Activated T-helper 1 cell treated with anti-CD3 and anti-CD28 coated beads, Interleukin-12 subunit alpha, Interleukin-12 subunit beta, Interleukin-2, Interleukin-4 antibody, amounts not matched to agents 30 ng/mL and 10 ng/mL and 1 ng/mL, durations not matched to agents 14 hours and 24 hours and 36 hours (primary cell): ENCODE measurements at regions of chr12 and their contacts with region 1.

Region 1: DNA sequence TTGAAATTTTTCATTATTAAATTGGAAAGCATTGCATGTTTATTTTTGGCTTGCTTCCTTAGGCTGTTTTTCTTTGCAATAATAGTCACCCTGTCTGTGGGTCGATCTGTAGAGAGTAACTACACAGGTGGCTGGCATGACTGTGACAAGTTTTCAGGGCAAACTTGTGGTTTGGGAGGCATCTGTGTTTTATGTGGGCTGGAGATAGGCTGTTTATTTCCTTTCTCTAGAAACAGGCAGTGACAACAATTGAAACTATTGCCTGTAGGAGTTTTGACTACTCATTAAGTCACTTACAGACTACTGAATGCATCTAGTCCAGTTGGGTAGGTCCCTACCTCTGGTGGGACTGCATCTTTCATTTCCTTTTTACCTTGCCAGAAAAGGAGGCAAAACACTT is 155.6 kb downstream of the DYRK2 start:
- DNase-seq: peak; percentile 22
- H3K4me3 Mint-ChIP-seq: no peak overlapping the region
- H3K27ac Mint-ChIP-seq: no peak overlapping the region
- H3K4me1 Mint-ChIP-seq: peaks cover 13% of the 10 kb centered on the region
- H3K27me3 Mint-ChIP-seq: peaks cover 4% of the 10 kb centered on the region

Region 2: DNA sequence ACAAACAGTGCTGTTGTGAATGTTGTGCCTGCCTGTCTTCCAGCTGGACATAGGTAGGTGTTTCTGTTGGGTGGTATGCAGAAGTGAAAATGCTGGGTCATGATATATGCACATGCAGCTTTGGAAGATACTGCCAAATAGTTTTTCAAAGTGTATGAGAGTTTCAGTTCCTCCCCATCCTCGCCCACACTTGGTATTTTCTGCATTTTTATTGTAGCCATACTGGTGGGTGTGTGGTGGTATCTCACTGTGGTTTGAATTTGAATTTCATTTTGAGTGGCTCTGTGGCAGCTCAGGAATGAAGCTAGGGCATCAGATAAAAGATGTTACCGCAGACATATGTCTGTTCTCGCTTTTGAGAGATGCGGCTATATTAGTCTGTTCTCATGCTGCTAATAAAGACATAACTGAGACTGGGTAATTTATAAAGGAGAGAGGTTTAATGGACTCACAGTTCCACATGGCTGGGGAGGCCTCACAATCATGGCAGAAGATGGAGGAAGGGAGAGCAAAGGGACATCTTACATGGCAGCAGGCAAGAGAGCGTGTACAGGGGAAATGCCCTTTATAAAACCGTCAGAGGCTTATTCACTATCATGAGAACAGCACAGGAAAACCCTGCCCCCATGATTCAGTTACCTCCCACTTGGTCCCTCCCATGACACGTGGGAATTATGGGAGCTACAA is 351.9 kb before region 1 on chr12:
- intact Hi-C with region 1: loop called (anchors 1 kb)
- DNase-seq: no peak
- H3K4me3 Mint-ChIP-seq: peak overlapping the region; percentile 12
- H3K27ac Mint-ChIP-seq: peak overlapping the region; percentile 82
- H3K4me1 Mint-ChIP-seq: peaks cover 47% of the 10 kb centered on the region
- H3K27me3 Mint-ChIP-seq: peaks cover 20% of the 10 kb centered on the region

Region 3: GRCh38 chr12:67758119-67758518 is 46.0 kb before region 1 on chr12:
- intact Hi-C with region 1: loop called (anchors 1 kb)
- DNase-seq: no peak
- H3K4me3 Mint-ChIP-seq: no peak overlapping the region
- H3K27ac Mint-ChIP-seq: no peak overlapping the region
- H3K4me1 Mint-ChIP-seq: no peaks in the 10 kb centered on the region
- H3K27me3 Mint-ChIP-seq: no peaks in the 10 kb centered on the region

Region 4: DNA sequence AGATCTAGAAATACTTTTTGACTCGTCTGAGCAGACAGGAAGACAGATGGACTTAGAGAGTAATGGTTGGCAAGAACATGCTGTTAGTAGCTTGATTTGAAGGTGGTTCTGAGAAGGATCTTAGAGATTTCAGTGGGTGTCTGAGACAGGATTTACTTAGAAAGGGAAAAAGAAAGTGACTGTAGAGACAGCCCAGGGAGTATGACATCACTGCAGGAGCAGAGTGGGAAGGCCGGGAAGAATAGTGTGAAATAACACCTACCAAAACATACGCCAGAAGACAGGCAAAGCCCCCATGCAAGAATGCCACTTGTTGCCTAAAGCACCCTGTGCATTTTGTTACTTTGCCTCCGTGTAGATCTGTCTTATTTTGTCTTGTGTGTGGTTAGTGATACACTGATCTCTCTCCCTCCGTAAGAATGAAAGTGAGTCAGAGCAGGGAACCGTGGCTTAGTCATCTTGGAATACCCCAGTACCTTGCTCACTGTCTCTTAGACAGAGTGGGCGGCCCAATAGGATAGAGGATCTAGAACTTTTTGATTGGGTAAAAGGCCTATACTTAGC is 23.7 kb after region 1 on chr12:
- intact Hi-C with region 1: loop called (anchors 1 kb)
- DNase-seq: no peak
- H3K4me3 Mint-ChIP-seq: peak overlapping the region; percentile 3
- H3K27ac Mint-ChIP-seq: peak overlapping the region; percentile 67
- H3K4me1 Mint-ChIP-seq: peaks cover 14% of the 10 kb centered on the region
- H3K27me3 Mint-ChIP-seq: no peaks in the 10 kb centered on the region